ENCODE measurements at regions of chr6 and their contacts with region 1.

Region 1: GRCh38 chr6:24689964-24690363 is 23.1 kb downstream of the ACOT13 start:
- DNase-seq: no peak
- CTCF ChIP-seq: no peak

Region 2: GRCh38 chr6:24431045-24431451 is 258.9 kb before region 1 on chr6:
- in situ Hi-C with region 1: loop called (anchors 25 kb)
- DNase-seq: peak; percentile 42
- CTCF ChIP-seq: peak; percentile 67

Region 3: DNA sequence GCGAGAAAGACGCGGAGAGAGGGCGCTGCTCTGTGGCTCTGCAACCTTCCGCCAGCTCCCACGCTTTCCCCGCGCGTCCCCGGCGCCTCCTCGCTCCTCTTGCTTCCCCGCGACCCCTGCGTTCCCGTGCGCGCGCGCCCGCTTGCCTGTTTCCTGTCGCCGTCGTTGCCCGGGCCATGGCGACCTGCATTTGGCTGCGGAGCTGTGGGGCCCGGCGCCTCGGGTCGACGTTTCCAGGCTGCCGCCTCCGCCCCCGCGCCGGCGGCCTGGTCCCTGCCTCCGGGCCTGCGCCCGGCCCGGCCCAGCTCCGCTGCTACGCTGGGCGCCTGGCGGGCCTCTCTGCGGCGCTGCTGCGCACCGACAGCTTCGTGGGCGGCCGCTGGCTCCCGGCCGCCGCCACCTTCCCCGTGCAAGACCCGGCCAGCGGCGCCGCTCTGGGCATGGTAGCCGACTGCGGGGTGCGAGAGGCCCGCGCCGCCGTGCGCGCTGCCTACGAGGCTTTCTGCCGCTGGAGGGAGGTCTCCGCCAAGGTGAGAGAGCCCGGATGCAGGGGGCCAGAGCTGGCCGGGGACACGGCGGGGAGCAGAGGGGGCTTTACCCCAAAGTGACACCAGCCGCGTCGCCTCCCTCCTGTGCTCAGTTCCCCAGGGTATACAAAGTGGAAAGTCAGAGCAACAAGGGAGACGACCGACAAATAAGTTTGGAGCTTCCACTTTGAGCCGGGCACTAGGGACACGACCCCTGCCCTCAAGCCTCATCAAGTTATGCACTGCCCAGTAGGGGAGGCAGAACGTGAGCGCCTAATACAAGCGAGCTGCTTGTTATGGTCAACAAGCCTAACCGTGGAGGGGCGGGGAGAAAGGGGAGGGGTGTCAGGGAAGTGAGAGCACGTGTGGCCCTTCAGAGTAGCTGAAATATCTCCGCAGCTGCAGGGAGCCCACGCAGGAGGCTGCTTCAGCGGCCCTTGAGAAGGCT is 194.9 kb before region 1 on chr6 and contains the start of gene ALDH5A1:
- in situ Hi-C with region 1: no loop called
- DNase-seq: peak; percentile 82
- CTCF ChIP-seq: peak; percentile 61

Region 4: DNA sequence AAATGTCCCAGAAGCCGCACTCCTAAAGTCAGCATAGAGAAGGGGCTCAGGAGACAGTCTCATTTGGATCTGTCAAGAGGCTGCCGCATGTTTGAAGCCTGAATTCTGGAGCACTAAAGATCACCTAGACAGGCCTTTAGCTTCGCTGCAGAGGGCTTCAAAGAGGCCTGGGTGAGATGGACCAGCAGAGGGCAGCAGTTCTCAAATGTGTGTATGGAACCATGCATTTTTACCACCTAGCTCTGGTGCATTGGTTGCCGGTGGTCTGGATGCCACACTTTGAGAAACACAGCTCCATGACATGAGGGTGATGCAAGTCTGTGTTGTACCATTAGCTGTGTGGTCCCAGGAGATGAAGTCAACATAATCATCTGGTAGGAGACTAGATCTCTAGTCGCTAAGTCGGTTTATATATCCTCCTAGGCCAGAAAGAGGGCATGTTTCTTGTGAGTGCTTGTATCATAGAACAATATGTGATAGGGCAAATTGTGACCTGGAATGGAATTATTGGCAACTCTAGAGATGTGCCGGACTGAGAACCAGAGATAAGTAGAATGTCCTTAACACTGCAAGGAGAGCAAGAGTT is 108.8 kb before region 1 on chr6:
- in situ Hi-C with region 1: loop called (anchors 10 kb)
- DNase-seq: peak; percentile 43
- CTCF ChIP-seq: peak; percentile 90